GM13976 (cell line): ENCODE measurements at regions of chr6 and their contacts with region 1.

Region 1: GRCh38 chr6:127737009-127737486 is 160.1 kb downstream of the C6orf58 start:
- DNase-seq: peak; percentile 36
- CTCF ChIP-seq: peak; percentile 41

Region 2: DNA sequence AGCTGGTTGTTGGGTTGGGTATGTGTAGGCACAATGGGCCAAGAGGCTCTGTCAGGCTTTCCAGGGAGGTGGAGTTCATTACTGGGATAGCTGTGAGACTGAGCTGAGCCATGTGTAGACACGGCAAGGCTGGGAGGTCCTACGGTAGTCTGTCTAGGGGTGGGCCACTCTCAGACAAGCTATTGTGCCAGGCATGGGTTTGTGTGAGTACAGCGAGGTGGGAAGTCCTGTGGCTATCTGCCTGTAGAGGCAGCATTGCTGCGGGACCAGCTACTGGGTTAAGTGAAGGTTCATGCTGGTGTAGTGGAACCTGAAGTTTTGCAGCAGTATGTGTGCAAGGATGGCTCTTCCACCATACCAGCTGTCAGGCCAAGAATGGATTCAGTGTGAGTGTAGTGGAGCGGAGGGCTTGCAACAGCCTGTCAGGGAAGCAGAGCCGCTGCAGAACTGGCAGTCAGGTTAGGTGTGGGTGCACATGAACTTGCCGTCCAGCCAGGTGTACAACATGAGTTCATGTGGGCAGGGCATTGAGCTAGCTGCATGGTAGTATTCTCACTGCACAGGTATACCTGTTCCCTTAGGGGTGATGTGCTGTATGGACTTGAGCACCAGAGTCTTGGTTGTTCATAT is 1475.1 kb before region 1 on chr6:
- in situ Hi-C with region 1: no loop called
- DNase-seq: no peak
- CTCF ChIP-seq: no peak

Region 3: GRCh38 chr6:127279815-127280214 is 457.2 kb before region 1 on chr6:
- in situ Hi-C with region 1: no loop called
- DNase-seq: no peak
- CTCF ChIP-seq: no peak

Region 4: DNA sequence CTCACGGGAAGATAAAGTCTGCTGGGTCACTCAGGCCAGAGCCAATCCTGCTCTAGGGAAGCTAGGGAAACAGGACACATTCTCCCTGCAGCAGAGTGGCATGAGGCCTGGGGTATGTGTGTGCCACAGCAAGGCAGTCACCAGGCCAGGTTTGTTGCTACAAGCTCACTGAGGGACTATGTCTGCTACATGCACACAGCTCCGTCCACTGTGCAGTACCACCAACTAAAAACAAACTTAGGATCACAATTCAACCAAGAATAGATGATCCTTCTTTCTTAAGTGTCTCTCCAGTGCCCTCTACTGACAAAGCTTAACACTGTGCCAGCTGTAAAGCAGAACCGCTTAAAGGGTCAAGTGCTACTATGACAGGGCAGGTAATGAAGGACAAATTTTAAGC is 590.8 kb after region 1 on chr6:
- in situ Hi-C with region 1: loop called (anchors 25 kb)
- DNase-seq: peak; percentile 5
- CTCF ChIP-seq: no peak

Region 5: DNA sequence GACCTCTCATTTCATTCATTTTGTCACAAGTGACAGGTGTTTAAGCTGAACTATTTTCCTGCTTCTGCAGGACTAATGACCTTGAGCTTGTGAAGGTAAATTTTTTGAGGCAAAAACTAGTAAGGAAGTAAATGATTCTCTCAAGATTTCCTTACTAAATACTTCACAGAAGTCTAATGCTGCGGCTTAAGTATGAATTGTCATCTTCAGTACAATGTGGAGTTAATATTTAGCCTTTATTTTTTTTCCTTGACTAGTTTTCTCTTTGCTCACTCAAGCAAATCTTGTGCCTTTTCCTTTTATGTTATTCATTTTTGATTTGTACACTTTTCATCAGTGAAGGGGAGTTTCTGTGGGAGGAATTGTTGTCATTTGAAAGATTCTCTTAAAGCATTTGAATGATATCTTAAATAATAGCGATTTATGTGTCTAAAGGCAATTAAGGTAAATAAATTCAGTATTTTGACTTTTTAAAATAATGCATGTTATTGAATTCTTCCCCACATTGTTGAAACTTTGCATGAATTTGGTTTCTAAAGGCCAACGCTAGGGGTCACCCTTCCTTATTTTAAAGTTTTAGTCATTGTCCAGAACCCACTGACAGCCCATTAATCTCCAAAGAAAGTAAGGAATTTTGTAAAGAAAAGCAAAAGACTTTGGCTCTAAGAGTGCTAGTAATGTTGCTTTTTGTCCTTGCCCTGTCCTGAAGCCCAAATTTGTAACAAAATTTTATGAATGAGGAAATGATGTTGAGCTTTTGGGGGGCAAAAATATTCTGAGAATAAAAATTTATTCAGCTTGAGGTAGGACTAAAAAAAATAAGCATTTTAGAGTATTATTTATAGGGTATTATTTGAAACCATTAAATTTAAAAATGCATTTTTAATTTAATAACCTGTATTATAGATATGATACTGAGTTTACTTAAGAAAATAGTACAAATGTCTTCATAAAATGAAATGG is 988.5 kb after region 1 on chr6:
- in situ Hi-C with region 1: loop called (anchors 25 kb)
- DNase-seq: no peak
- CTCF ChIP-seq: peak; percentile 45